ENCODE measurements at regions of chr14 and their contacts with region 1.

Region 1: GRCh38 chr14:70816525-70816924 is 7.2 kb upstream of the MAP3K9 start:
- DNase-seq: peak in 1 of 2 donors; percentile 50
- H3K4me3 ChIP-seq: no peak overlapping the region
- H3K27ac ChIP-seq: no peak overlapping the region
- H3K4me1 ChIP-seq: peaks cover 0 to 5% of the 10 kb centered on the region in 2 donors
- H3K27me3 ChIP-seq: no peaks in the 10 kb centered on the region
- CTCF ChIP-seq: no peak

Region 2: DNA sequence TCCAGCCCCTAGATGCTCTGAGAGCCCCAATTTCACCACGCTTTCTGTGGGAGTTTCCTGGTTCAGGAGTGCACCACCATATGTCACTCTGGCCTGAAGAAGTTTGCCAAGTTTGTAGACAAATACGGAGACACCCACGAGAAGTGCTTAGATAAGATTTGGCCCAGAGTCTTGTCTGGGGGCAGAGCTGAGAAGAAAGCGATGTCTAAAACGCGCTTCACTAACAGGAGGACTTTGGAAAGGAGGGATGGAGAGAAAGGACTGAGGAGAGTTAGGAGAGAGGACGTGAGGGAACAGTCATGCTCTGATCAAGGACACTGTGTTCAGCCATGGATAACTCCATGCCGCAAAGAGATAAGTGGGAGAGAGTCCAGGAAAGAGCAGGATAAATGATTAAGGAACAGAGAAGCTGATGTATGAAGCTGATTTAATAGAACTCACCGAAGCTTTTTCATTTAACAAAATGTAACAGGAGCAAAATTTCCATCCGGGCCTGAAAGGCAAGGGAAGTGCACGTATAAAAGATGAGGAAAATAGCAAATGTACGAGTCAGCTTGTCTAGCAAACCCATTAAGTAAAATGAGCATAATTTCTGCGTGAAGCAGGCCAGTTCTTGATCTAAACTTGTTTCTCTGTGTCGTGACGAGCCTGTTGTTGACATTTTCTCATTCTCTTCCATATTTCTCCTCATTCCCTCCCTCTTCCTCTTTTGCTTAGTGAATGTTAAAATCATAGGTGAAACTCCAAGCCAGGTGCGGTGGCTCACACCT is 16.2 kb after region 1 on chr14:
- intact Hi-C with region 1: no loop called
- DNase-seq: no peak
- H3K4me3 ChIP-seq: no peak overlapping the region
- H3K27ac ChIP-seq: no peak overlapping the region
- H3K4me1 ChIP-seq: no peaks in the 10 kb centered on the region
- H3K27me3 ChIP-seq: no peaks in the 10 kb centered on the region
- CTCF ChIP-seq: no peak

Region 3: GRCh38 chr14:70897464-70897863 is 80.9 kb after region 1 on chr14:
- intact Hi-C with region 1: loop called (anchors 2 kb)
- DNase-seq: no peak
- H3K4me3 ChIP-seq: peak overlapping the region in 1 of 2 donors; percentile 3
- H3K27ac ChIP-seq: peak overlapping the region; percentile 60 to 62
- H3K4me1 ChIP-seq: peaks cover 7 to 18% of the 10 kb centered on the region in 2 donors
- H3K27me3 ChIP-seq: no peaks in the 10 kb centered on the region
- CTCF ChIP-seq: no peak